Heart left ventricle (tissue), 16 donors: ENCODE measurements at regions of chr13 and their contacts with region 1.

Region 1: DNA sequence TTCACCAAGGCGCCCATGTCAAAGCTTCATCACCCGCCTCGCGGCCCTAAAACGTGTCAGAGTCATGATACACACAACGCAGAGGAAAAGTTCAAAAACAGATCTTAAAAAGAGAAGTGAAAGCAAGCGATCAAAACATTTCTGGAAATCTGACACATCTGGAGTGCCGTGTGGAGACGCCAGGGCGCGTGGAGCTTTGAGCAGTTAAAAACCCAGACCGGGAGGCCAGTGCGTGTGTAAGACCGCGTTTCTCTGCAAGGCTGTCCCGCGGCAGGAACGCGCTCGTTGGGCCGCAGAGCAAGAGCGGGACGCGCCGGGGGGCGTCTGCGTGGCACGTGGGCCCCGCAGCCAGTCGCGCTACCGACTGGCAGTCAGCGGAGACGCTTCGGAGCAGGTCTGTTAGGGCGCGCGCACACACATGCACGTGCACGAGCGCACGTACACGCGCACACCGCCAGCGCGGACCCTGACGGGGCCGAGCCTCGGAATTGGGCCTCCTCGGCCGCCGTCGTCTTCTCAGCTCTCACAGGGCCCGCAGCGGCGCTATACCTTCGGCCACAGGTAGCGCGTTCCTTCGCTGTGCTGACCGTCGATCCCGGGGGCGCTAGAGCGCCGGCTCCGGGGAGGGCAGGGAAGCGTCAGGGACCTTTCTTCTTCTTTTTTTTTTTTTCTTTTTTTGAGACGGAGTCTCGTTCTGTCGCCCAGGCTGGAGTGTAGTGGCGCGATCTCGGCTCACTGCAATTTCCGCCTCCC is 35.8 kb downstream of the RNF6 start:
- DNase-seq: peak; percentile 86 to 93 (median 89)
- ATAC-seq: peak; percentile 80 to 97 (median 96)
- H3K4me3 ChIP-seq: peak overlapping the region; percentile 6 to 77 (median 70)
- H3K27ac ChIP-seq: peak overlapping the region; percentile 35 to 94 (median 76)
- H3K4me1 ChIP-seq: peaks cover 0 to 22% (median 6%) of the 10 kb centered on the region in 12 donors
- H3K27me3 ChIP-seq: no peaks in the 10 kb centered on the region
- CTCF ChIP-seq: peak in 8 of 12 donors; percentile 7 to 50 (median 28)
- POLR2A ChIP-seq: peak in 1 of 2 donors; percentile 15

Region 2: GRCh38 chr13:26202365-26202972 is 16.2 kb after region 1 on chr13:
- intact Hi-C with region 1: no loop called
- DNase-seq: no peak
- ATAC-seq: peak in 1 of 4 donors; percentile 28
- H3K4me3 ChIP-seq: no peak overlapping the region
- H3K27ac ChIP-seq: peak overlapping the region in 9 of 12 donors; percentile 7 to 42 (median 33)
- H3K4me1 ChIP-seq: peaks cover 0 to 21% (median 9%) of the 10 kb centered on the region in 12 donors
- H3K27me3 ChIP-seq: no peaks in the 10 kb centered on the region
- CTCF ChIP-seq: no peak
- POLR2A ChIP-seq: no peak

Region 3: GRCh38 chr13:26221721-26222519 is 35.6 kb after region 1 on chr13 and contains the start of gene RNF6:
- intact Hi-C with region 1: loop called in 2 of 10 experiments (anchors 5 kb)
- DNase-seq: peak; percentile 91 to 96 (median 96)
- ATAC-seq: peak; percentile 98 to 99 (median 99)
- H3K4me3 ChIP-seq: peak within 1 kb of the TSS; percentile 70 to 99 (median 90)
- H3K27ac ChIP-seq: peak within 1 kb of the TSS; percentile 90 to 99 (median 96)
- H3K4me1 ChIP-seq: peaks cover 4 to 33% (median 21%) of the 10 kb centered on the region in 12 donors
- H3K27me3 ChIP-seq: no peaks in the 10 kb centered on the region
- CTCF ChIP-seq: no peak
- POLR2A ChIP-seq: peak in 1 of 2 donors; percentile 39
- total RNA-seq, gene RNF6: 13.9 to 38.2 (median 23.8) TPM

Region 4: GRCh38 chr13:26362261-26362660 is 176.0 kb after region 1 on chr13:
- intact Hi-C with region 1: loop called in 1 of 10 experiments (anchors 5 kb)
- DNase-seq: no peak
- ATAC-seq: no peak
- H3K4me3 ChIP-seq: no peak overlapping the region
- H3K27ac ChIP-seq: no peak overlapping the region
- H3K4me1 ChIP-seq: no peaks in the 10 kb centered on the region
- H3K27me3 ChIP-seq: no peaks in the 10 kb centered on the region
- CTCF ChIP-seq: no peak
- POLR2A ChIP-seq: no peak

Region 5: GRCh38 chr13:26482451-26483197 is 296.3 kb after region 1 on chr13:
- intact Hi-C with region 1: loop called in 1 of 10 experiments (anchors 5 kb)
- DNase-seq: peak in 2 of 5 donors; percentile 37 to 51
- ATAC-seq: peak in 1 of 4 donors; percentile 32
- H3K4me3 ChIP-seq: no peak overlapping the region
- H3K27ac ChIP-seq: no peak overlapping the region
- H3K4me1 ChIP-seq: peaks cover 0 to 22% (median 4%) of the 10 kb centered on the region in 12 donors
- H3K27me3 ChIP-seq: no peaks in the 10 kb centered on the region
- CTCF ChIP-seq: peak; percentile 70 to 92 (median 82)
- POLR2A ChIP-seq: no peak

Region 6: GRCh38 chr13:26498656-26499591 is 312.6 kb after region 1 on chr13:
- intact Hi-C with region 1: loop called (anchors 1 to 2 kb)
- DNase-seq: no peak
- ATAC-seq: peak in 3 of 4 donors; percentile 12 to 51 (median 27)
- H3K4me3 ChIP-seq: no peak overlapping the region
- H3K27ac ChIP-seq: peak overlapping the region in 2 of 12 donors; percentile 13 to 15
- H3K4me1 ChIP-seq: peaks cover 0 to 11% (median 0%) of the 10 kb centered on the region in 12 donors
- H3K27me3 ChIP-seq: peaks cover 0 to 5% (median 0%) of the 10 kb centered on the region in 9 donors
- CTCF ChIP-seq: peak in 1 of 12 donors; percentile 3
- POLR2A ChIP-seq: no peak

Region 7: GRCh38 chr13:26698392-26699196 is 512.3 kb after region 1 on chr13:
- intact Hi-C with region 1: loop called (anchors 1 to 10 kb)
- DNase-seq: peak; percentile 66 to 85 (median 74)
- ATAC-seq: peak; percentile 62 to 91 (median 83)
- H3K4me3 ChIP-seq: peak overlapping the region in 8 of 12 donors; percentile 12 to 46 (median 28)
- H3K27ac ChIP-seq: no peak overlapping the region
- H3K4me1 ChIP-seq: peaks cover 0 to 7% (median 0%) of the 10 kb centered on the region in 12 donors
- H3K27me3 ChIP-seq: no peaks in the 10 kb centered on the region
- CTCF ChIP-seq: peak; percentile 92 to 99 (median 98)
- POLR2A ChIP-seq: no peak

Region 8: DNA sequence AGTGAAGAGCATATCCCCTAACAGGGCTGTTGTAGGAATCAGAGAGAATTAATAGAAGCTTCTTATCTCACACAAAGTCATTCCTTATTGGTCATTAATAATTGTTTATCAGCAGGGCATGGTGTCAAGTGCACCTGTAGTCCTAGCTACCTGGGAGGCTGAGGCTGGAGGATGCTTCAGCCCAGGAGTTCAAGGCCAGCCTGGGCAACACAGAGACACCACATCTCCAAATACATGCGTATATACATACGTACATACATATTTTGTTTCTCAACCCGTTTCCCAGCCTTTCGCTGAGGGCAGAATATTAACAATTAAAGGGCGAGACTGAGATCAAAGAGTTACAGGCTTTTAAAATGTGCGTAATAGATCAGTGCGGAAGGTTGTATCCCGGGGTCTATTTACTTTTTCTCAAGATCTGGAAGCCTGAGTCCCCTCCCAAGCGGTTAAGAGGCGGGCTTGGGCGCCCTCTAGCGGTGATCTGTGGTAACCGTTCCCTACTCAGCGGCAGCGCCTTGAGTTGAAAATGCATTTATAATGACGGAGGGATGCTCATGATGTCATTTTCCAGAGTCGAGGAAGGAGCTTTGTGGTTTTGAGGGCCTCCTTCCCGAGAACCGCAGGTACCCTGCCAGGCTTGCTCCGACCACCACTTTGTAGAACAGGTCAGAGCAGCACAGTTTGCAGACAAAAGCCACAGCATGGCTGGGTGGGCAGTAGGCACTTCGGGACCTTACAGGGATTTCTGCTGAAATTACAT is 743.9 kb after region 1 on chr13:
- intact Hi-C with region 1: loop called in 1 of 10 experiments (anchors 10 kb)
- DNase-seq: peak; percentile 50 to 83 (median 57)
- ATAC-seq: peak in 3 of 4 donors; percentile 68 to 73 (median 68)
- H3K4me3 ChIP-seq: no peak overlapping the region
- H3K27ac ChIP-seq: no peak overlapping the region
- H3K4me1 ChIP-seq: peaks cover 0 to 5% (median 0%) of the 10 kb centered on the region in 12 donors
- H3K27me3 ChIP-seq: peaks cover 0 to 12% (median 0%) of the 10 kb centered on the region in 9 donors
- CTCF ChIP-seq: peak; percentile 85 to 97 (median 96)
- POLR2A ChIP-seq: no peak